ENCODE measurements at regions of chr5 and their contacts with region 1.

Region 1: GRCh38 chr5:134873987-134874830 is at the start of gene TXNDC15:
- DNase-seq: peak; percentile 79 to 85
- ATAC-seq: peak; percentile 89 to 91
- H3K4me3 ChIP-seq: peak within 1 kb of the TSS; percentile 92 to 98 (median 95)
- H3K27ac ChIP-seq: peak within 1 kb of the TSS; percentile 95 to 99 (median 96)
- H3K4me1 ChIP-seq: peaks cover 17 to 19% of the 10 kb centered on the region in 2 donors
- H3K27me3 ChIP-seq: no peaks in the 10 kb centered on the region
- CTCF ChIP-seq: no peak
- POLR2A ChIP-seq: peak in 1 of 2 donors; percentile 38
- total RNA-seq, gene TXNDC15: 37.0 to 81.1 (median 59.6) TPM

Region 2: GRCh38 chr5:134394932-134395331 is 479.3 kb before region 1 on chr5:
- in situ Hi-C with region 1: loop called in 1 of 4 experiments (anchors 25 kb)
- intact Hi-C with region 1: no loop called
- DNase-seq: no peak
- ATAC-seq: no peak
- H3K4me3 ChIP-seq: no peak overlapping the region
- H3K27ac ChIP-seq: no peak overlapping the region
- H3K4me1 ChIP-seq: no peaks in the 10 kb centered on the region
- H3K27me3 ChIP-seq: no peaks in the 10 kb centered on the region
- CTCF ChIP-seq: no peak
- POLR2A ChIP-seq: no peak

Measured in gastrocnemius medialis (tissue), 4 donors.